ENCODE measurements at regions of chr1 and their contacts with region 1.

Region 1: DNA sequence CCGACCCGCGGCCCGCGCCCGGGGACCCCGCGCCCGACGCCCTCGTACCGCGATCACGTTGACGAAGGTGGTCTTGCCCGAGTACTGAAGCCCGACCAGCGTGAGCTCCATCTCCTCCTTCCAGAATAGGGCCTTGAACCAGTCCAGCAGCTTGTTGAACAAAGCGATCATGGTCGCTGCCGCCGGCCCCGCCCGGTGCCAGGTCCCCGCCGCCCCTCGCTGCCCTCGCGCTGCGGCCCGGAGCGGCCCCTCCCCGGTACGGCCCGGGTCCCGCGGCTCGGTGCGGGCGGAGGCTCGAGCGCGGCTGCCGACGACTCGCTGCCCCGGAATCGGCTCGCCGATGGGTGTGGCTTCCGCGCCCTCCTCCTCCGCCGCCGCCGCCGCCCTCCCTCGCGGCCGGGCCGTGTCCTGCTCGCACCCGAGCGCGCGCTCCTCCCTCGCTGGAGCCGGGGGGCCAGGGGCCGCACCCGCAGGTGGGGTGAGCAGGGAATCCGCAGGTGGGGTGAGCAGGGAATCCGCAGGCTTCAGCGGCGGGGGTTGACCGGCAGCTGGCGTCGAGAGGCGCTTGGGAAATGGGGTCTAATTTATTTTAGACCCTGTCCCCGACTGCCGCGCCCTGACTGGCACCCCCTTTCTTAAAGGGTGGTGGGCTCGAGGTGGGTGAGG is at the start of gene ARL8A:
- DNase-seq: peak; percentile 73
- ATAC-seq: peak; percentile 75
- H3K4me3 Mint-ChIP-seq: peak within 1 kb of the TSS; percentile 93
- H3K27ac Mint-ChIP-seq: peak within 1 kb of the TSS; percentile 96
- H3K4me1 Mint-ChIP-seq: peaks cover 48% of the 10 kb centered on the region
- H3K27me3 Mint-ChIP-seq: no peaks in the 10 kb centered on the region
- CTCF ChIP-seq: no peak
- total RNA-seq, gene ARL8A: 56.3 and 58.0 TPM in 2 replicates

Region 2: GRCh38 chr1:201964261-201964660 is 180.3 kb before region 1 on chr1:
- CTCF ChIA-PET with region 1: no interaction called
- POLR2A ChIA-PET with region 1: interaction called, 12 read pairs
- intact Hi-C with region 1: no loop called
- DNase-seq: no peak
- ATAC-seq: no peak
- H3K4me3 Mint-ChIP-seq: no peak overlapping the region
- H3K27ac Mint-ChIP-seq: no peak overlapping the region
- H3K4me1 Mint-ChIP-seq: no peaks in the 10 kb centered on the region
- H3K27me3 Mint-ChIP-seq: no peaks in the 10 kb centered on the region
- CTCF ChIP-seq: no peak

Region 3: DNA sequence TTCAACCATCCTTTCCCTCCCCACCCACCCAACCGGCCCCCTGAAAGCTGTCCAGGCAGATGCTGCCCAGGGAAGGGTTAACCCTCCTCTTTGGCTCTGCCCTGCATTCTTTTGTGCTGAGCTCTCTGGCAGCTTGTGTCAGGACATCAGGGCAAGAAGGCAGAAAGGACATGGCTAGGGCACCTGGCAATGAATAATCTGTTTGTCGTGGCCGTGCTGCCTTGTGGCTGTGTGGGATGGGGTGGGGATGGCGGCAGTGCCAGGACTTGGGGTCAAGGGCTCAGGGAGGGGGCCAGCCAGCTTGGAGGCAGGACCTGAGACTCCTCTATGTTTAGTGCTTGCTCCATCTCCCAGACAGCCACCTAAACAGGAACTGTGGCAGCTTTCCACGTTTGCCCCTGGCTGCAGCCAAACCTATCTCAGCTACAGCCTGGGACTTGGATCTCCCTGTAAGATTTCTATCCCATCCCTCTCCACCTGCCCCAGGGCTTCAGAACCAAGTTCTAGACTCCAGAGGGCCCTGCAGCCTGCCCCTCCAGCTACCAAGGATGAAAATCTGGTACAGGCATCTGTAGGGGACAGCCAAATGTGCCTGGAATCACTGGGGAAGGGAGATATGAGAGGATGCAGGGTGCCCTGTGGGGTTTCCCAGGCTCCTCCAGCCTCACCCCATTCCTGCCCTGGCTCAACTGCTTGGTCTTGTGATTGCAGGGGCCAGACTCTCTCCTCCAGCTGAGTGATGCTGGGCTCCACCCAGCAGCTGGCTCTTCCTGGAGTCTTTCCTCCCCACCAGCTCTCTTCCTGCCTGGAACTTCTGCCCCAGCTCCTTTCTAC is 31.5 kb before region 1 on chr1:
- CTCF ChIA-PET with region 1: no interaction called
- POLR2A ChIA-PET with region 1: no interaction called
- intact Hi-C with region 1: no loop called
- DNase-seq: no peak
- ATAC-seq: no peak
- H3K4me3 Mint-ChIP-seq: no peak overlapping the region
- H3K27ac Mint-ChIP-seq: no peak overlapping the region
- H3K4me1 Mint-ChIP-seq: peaks cover 1% of the 10 kb centered on the region
- H3K27me3 Mint-ChIP-seq: no peaks in the 10 kb centered on the region
- CTCF ChIP-seq: no peak

Region 4: GRCh38 chr1:203026031-203026989 is 881.8 kb after region 1 on chr1 and contains the start of gene PPFIA4:
- CTCF ChIA-PET with region 1: no interaction called
- POLR2A ChIA-PET with region 1: no interaction called
- intact Hi-C with region 1: loop called (anchors 10 kb)
- DNase-seq: peak; percentile 87
- ATAC-seq: peak; percentile 97
- H3K4me3 Mint-ChIP-seq: peak within 1 kb of the TSS; percentile 73
- H3K27ac Mint-ChIP-seq: peak within 1 kb of the TSS; percentile 72
- H3K4me1 Mint-ChIP-seq: peaks cover 16% of the 10 kb centered on the region
- H3K27me3 Mint-ChIP-seq: peaks cover 3% of the 10 kb centered on the region
- CTCF ChIP-seq: no peak
- total RNA-seq, gene PPFIA4: 0.12 and 0.29 TPM in 2 replicates